ENCODE measurements at regions of chr1 and their contacts with region 1.

Region 1: GRCh38 chr1:222814536-222815439 is at the start of gene DISP1:
- DNase-seq: peak; percentile 66
- ATAC-seq: peak; percentile 83
- H3K4me3 Mint-ChIP-seq: peak within 1 kb of the TSS; percentile 95
- H3K27ac Mint-ChIP-seq: peak within 1 kb of the TSS; percentile 95
- H3K4me1 Mint-ChIP-seq: peaks cover 43% of the 10 kb centered on the region
- H3K27me3 Mint-ChIP-seq: peaks cover 4% of the 10 kb centered on the region
- CTCF ChIP-seq: no peak
- total RNA-seq, gene DISP1: 4.5 and 5.1 TPM in 2 replicates

Region 2: DNA sequence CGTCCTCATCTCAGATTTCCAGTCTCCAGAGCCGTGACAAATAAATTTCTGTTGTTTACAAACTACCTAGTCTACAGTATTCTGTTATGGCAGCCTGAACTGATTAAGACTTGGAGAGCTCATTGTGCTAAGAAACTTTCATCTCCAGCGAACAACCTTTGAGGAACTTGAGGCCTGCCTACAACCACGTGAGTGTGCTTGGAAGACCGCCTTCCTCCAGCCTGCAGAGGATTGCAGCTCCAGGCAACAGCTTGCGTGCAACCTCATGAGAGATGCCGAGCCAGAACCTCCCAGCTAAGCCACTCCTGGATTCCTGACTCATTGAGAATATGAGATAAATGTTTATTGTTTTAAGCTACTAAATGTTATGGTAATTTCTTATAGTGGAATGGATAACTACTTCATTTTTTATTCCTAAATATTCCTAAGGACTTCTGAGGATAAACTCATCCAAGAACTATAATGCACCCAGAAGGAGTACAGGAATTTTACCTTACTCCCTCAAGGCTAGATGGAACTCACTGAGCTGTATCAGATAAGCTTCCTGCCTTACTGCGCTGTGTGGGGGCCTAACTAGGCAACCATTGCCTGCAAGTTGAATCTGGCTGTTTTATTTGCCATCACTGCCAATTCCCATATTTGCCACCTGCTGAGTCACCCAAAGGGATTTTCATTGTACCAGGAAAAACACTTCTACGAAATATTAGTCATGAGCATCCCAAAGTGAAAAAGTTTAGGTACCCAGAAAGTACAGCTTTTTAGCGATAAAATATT is 60.2 kb before region 1 on chr1:
- CTCF ChIA-PET with region 1: no interaction called
- POLR2A ChIA-PET with region 1: no interaction called
- intact Hi-C with region 1: loop called (anchors 5 kb)
- DNase-seq: no peak
- ATAC-seq: no peak
- H3K4me3 Mint-ChIP-seq: no peak overlapping the region
- H3K27ac Mint-ChIP-seq: peak overlapping the region; percentile 61
- H3K4me1 Mint-ChIP-seq: peaks cover 65% of the 10 kb centered on the region
- H3K27me3 Mint-ChIP-seq: no peaks in the 10 kb centered on the region
- CTCF ChIP-seq: no peak